Activated T-helper 2 cell treated with anti-CD3 and anti-CD28 coated beads, Interferon-gamma antibody, Interleukin-2, Interleukin-4, amounts not matched to agents 10 μg/mL and 5 μg/mL and 100 μg/mL, durations not matched to agents 14 hours and 24 hours and 36 hours (primary cell): ENCODE measurements at regions of chr12 and their contacts with region 1.

Region 1: GRCh38 chr12:64826234-64826633 is 1.8 kb downstream of the TBC1D30 start:
- DNase-seq: peak; percentile 24
- H3K4me3 Mint-ChIP-seq: peak overlapping the region; percentile 46
- H3K27ac Mint-ChIP-seq: no peak overlapping the region
- H3K4me1 Mint-ChIP-seq: peaks cover 8% of the 10 kb centered on the region
- H3K27me3 Mint-ChIP-seq: peaks cover 58% of the 10 kb centered on the region

Region 2: DNA sequence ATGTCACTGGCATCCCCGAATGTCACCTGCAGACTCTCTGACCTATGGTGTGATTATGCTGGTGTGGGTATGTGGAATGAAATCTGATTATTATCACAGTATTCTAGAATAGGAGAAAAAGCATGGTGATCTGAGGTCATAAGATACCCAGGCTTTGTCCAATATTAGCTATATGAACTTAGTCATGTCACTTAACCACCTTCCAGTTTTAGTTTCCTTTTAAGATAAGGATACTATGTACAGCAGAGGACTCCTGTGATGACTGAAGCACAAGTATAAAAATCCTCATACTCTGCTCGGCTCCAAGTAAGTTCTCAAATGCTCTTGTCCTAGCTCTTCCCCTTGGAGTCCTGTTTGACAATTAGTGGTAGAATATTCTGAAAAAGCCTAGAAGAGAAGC is 69.9 kb before region 1 on chr12:
- intact Hi-C with region 1: no loop called
- DNase-seq: no peak
- H3K4me3 Mint-ChIP-seq: peak overlapping the region; percentile 4
- H3K27ac Mint-ChIP-seq: peak overlapping the region; percentile 70
- H3K4me1 Mint-ChIP-seq: peaks cover 53% of the 10 kb centered on the region
- H3K27me3 Mint-ChIP-seq: no peaks in the 10 kb centered on the region

Region 3: DNA sequence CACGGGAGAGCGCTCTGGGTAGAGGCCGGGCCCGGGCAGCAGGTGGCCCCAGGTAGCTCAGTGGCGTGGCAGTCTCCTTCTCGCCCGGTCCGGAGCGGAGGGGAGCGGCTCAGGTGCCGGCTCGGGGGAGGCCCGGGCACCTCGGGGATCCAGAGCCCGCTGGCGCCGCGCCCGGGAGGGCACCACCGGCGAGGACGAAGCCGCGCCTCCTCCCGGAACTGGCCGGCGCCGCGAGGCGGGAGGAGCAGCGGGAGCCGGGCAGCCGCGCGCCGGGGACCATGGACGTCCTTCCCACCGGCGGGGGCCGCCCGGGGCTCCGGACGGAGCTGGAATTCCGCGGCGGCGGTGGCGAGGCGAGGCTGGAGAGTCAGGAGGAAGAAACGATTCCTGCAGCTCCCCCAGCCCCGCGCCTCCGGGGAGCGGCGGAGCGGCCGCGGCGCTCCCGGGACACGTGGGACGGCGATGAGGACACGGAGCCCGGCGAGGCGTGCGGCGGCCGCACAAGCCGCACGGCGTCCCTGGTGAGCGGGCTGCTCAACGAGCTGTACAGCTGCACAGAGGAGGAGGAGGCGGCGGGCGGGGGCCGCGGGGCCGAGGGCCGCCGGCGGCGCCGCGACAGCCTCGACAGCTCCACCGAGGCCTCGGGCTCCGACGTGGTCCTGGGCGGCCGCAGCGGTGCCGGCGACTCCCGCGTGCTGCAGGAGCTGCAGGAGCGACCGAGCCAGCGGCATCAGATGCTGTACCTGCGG is 45.5 kb before region 1 on chr12:
- intact Hi-C with region 1: loop called (anchors 5 kb)
- DNase-seq: no peak
- H3K4me3 Mint-ChIP-seq: peak overlapping the region; percentile 69
- H3K27ac Mint-ChIP-seq: no peak overlapping the region
- H3K4me1 Mint-ChIP-seq: peaks cover 13% of the 10 kb centered on the region
- H3K27me3 Mint-ChIP-seq: peaks cover 76% of the 10 kb centered on the region

Region 4: DNA sequence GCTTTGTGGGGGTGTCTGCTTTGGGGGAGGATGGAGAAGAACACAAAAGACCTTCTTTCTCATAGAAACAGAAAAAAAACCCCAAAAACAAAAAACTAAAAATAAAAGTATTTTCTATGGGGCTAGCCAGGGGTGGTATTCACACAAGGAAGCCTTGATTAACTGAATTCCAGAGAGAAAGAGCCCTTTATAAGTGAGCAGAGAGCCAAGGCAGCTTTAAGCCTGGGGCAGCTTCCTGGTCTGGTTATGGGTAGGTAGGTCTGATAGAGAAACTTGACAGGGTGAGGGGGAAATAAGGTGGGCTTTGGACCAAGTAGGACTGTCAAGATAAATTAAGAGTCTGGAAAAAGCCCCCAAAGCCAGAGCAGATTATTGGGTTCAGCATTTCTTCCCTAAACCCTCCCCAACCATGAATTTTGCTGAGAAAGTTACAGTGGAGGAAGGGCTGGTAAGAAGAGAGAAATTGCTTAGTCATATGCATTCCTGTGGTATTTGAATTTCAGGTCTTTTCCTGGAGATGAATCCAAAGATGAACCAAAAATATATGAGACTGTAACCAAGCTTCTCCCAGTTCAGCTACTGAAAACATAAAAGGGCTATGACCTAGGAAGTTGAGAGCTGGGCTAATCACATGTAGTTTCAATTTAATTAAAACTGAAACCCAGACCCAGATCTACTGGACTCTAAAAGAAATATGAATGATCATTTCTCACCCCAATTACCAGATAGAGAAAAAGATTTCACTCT is 142.9 kb after region 1 on chr12:
- intact Hi-C with region 1: no loop called
- DNase-seq: no peak
- H3K4me3 Mint-ChIP-seq: no peak overlapping the region
- H3K27ac Mint-ChIP-seq: no peak overlapping the region
- H3K4me1 Mint-ChIP-seq: no peaks in the 10 kb centered on the region
- H3K27me3 Mint-ChIP-seq: peaks cover 7% of the 10 kb centered on the region

Region 5: DNA sequence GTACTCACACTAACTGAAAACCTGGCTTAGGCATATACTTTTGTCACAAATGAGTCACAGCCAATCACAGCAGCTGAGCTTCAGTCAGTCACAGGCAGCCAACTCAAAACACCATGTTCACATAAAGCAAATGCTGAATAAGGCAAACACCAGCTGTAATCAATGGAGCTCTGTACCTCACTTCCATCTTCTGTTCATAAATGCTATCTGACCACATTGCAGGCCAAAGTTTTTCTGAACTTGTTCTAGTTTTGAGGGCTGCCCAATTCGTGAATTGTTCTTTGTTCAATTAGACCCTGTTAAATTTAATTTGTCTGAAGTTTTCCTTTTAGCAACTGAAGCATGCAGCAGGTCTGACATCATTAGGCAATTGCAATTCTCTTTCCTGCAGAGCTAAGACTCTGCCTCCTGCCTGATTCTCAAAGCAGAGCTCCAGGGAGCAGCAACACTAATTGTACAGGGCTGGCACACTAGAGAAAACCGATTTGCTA is 164.9 kb after region 1 on chr12:
- intact Hi-C with region 1: no loop called
- DNase-seq: no peak
- H3K4me3 Mint-ChIP-seq: no peak overlapping the region
- H3K27ac Mint-ChIP-seq: no peak overlapping the region
- H3K4me1 Mint-ChIP-seq: no peaks in the 10 kb centered on the region
- H3K27me3 Mint-ChIP-seq: peaks cover 5% of the 10 kb centered on the region